IMR-90 (cell line): ENCODE measurements at regions of chr18 and their contacts with region 1.

Region 1: DNA sequence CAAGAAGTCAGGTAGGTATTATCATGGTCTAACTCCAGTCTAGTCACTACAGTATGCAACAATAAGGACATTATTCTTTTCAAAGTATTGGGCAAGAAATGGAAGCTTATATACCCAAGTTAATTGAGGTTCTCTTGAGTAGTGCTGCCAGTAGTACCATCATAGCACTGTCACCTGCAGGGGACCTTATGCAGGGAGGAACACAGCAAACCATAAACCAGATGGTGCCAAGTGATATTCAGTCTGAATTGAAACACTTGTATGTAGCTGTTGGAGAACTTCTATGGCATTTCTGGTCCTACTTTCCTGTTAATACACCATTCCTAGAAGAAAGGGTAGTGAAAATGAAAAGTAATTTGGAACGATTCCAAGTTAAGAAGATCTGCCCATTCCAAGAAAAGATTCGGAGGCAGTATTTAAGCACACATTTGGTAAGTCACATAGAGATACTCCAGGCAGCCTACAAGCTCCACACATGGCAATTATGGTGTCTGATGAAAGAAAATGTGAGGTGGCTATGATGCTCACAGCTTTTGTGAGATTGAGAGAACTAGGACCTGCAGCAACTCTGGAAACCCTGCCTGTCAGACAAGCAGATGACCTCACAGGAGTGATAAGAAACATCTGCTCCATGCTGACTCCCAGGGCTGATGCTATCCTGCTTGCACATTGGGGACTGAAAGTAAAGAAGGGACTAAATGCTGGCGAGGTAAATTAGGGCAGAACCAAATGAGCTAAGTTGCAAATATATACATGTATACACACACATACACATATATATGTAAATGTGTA is 174.7 kb downstream of the MC4R start:
- DNase-seq: peak; percentile 56
- ATAC-seq: no peak
- H3K4me3 ChIP-seq: no peak overlapping the region
- H3K27ac ChIP-seq: no peak overlapping the region
- H3K4me1 ChIP-seq: no peaks in the 10 kb centered on the region
- H3K27me3 ChIP-seq: no peaks in the 10 kb centered on the region
- CTCF ChIP-seq: no peak
- POLR2A ChIP-seq: no peak
- RAD21 ChIP-seq: no peak

Region 2: GRCh38 chr18:60372596-60372995 is 174.7 kb after region 1 on chr18 and contains the start of gene MC4R:
- CTCF ChIA-PET with region 1: no interaction called
- POLR2A ChIA-PET with region 1: no interaction called
- dilution Hi-C with region 1: no loop called
- in situ Hi-C with region 1: no loop called
- intact Hi-C with region 1: loop called (anchors 10 kb)
- DNase-seq: peak; percentile 82
- ATAC-seq: peak; percentile 99
- H3K4me3 ChIP-seq: peak within 1 kb of the TSS; percentile 15; the same call in 1 of the 2 replicates
- H3K27ac ChIP-seq: no peak within 1 kb of the TSS
- H3K4me1 ChIP-seq: no peaks in the 10 kb centered on the region; the same call in 1 of the 2 replicates
- H3K27me3 ChIP-seq: peaks cover 4% of the 10 kb centered on the region; the same call in 1 of the 2 replicates
- CTCF ChIP-seq: no peak
- POLR2A ChIP-seq: no peak
- RAD21 ChIP-seq: no peak
- total RNA-seq, gene MC4R: 0.18 and 0.28 TPM in 2 replicates